HEK293T (cell line): ENCODE measurements at regions of chr13 and their contacts with region 1.

Region 1: DNA sequence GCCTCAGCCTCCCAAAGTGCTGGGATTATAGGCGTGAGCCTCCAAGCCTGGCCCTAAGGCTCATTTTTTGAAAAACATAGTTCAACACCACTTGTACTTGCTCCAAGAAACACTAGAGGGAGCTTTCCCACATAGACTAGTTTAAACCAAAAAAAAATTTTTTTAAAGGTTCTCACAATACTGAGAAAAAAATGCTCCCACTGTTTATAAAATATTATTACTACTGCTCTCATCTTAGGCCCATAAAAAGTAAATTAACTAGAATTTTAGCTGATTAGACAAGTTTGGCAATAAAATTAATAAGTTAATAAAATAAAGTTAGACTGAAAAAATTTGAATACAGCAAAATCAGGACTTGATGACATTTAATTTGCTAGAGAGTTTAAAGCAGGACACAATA is 109.5 kb downstream of the TBC1D4 start:
- DNase-seq: peak; percentile 68

Region 2: DNA sequence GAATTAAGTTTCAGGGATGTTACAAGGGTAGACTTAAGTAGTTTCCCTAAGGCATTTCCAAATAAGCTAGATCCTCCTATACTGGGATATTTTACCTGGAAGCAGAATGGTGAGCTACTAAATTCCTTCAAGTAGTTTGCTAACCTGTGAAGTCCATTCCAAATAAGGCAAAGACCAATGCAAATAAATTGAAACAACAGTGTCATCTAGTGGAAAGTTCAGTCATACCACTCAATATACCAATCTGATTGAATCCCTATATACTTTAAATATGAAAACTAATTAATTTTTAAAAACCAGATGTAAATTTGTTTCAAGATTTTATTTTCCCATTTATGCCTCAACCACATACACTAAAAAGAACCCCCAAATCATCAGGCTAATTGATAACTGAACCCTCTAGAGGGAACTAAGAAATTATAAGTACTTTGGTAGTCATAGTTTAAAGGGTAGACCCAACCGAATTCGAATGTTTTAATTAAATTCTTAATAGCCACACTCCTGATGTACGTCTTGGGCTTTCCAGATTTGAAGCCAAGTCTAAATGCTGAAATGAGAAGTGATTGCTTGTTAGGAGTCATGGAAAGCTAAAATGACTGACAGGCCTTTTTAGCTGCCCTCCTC is 114.2 kb before region 1 on chr13:
- CTCF ChIA-PET with region 1: no interaction called
- POLR2A ChIA-PET with region 1: no interaction called
- DNase-seq: peak; percentile 51

Region 3: DNA sequence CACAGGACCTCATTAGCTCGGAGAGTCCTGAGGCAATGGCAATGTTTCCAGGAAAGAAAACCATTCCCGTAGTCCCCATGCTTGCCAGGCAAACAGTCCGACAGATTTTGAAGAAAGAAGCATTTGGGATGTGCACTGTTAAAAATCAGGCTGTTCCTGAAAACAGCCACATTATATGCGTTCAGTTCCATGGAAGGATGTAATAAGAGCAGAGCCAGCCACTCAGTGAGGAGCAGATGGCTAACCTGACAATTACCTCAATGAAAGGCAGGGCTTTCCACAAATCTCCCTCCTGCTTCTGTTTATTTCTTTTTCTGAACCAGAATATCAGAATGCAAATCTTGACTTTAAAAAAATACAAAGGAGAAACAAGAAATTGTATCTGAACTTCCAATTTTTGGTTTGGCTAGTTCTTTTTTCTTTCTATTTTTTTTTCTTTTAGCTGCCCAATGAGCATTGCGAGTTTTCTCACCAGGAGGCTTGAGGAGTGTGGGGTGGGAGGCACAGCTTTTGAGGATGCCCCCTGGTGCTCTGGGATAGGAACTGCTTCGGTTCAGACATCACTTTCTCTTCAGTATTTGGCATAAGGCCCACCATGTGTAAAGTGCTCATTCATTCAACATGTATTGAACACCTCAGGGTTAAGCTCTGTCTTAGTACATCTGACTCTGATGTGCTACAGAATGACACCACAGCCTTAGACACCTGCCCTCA is 14.8 kb before region 1 on chr13:
- CTCF ChIA-PET with region 1: interaction called, 26 read pairs
- POLR2A ChIA-PET with region 1: no interaction called
- DNase-seq: peak; percentile 93

Region 4: DNA sequence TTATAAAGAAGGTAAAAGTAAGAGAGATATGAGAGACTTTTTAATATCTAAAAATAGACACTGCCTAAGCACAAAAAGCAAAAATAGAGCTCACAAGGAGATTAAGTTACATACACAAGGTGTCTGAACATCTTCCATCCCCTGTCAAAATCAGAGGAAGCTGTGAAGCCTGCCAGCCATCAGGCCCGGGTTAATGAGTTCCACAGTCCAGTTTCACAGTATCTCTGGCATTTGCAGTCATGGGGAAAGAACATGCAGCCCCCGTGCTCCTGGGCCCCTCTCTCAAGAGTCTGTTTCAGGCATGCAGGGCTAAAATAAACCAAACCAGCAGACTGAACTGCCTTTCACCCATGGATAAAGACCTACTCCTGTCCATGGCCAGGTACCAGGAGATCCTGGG is 30.3 kb after region 1 on chr13:
- CTCF ChIA-PET with region 1: interaction called, 14 read pairs
- POLR2A ChIA-PET with region 1: no interaction called
- DNase-seq: no peak

Region 5: GRCh38 chr13:75495938-75496337 is 123.4 kb after region 1 on chr13:
- CTCF ChIA-PET with region 1: no interaction called
- POLR2A ChIA-PET with region 1: no interaction called
- DNase-seq: no peak